HepG2 (cell line): ENCODE measurements at regions of chr11 and their contacts with region 1.

Region 1: DNA sequence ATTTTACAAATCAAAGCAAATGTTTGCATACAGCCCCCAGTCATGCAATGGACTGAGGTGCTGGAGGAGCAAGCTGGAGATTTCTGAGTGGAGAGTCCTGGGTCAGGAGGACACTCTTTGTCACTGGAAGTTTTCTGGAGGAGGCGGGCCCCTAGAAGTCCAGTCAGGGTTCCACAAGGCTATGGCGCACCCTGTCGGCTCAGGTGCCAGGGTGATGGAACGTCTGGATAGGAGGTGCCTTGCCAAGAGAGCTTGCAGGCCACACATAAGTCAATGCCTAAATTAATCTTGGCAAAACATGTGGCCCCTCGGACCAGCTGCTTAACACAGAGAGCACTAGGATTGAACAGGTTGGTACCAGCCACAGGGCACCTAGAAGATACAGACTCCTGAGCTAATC is 174.7 kb upstream of the CADM1 start:
- DNase-seq: peak; percentile 37
- ATAC-seq: peak; percentile 96
- H3K4me3 ChIP-seq: no peak overlapping the region
- H3K27ac ChIP-seq: no peak overlapping the region
- H3K4me1 ChIP-seq: no peaks in the 10 kb centered on the region
- H3K27me3 ChIP-seq: peaks cover 1 to 13% of the 10 kb centered on the region in 2 experiments; a peak in 1 of 5 replicates
- CTCF ChIP-seq: peak; percentile 77
- EP300 ChIP-seq: no peak
- POLR2A ChIP-seq: no peak
- RAD21 ChIP-seq: peak; percentile 75

Region 2: GRCh38 chr11:115256397-115257197 is 422.3 kb before region 1 on chr11:
- CTCF ChIA-PET with region 1: no interaction called
- POLR2A ChIA-PET with region 1: no interaction called
- in situ Hi-C with region 1: no loop called
- intact Hi-C with region 1: loop called (anchors 5 kb)
- DNase-seq: no peak
- ATAC-seq: no peak
- H3K4me3 ChIP-seq: no peak overlapping the region
- H3K27ac ChIP-seq: no peak overlapping the region
- H3K4me1 ChIP-seq: no peaks in the 10 kb centered on the region
- H3K27me3 ChIP-seq: no peaks in the 10 kb centered on the region
- CTCF ChIP-seq: no peak
- EP300 ChIP-seq: no peak
- POLR2A ChIP-seq: no peak
- RAD21 ChIP-seq: no peak

Region 3: GRCh38 chr11:115324581-115325432 is 354.1 kb before region 1 on chr11:
- CTCF ChIA-PET with region 1: interaction called, 11 read pairs
- POLR2A ChIA-PET with region 1: no interaction called
- in situ Hi-C with region 1: loop called (anchors 10 kb)
- intact Hi-C with region 1: loop called (anchors 1 kb)
- DNase-seq: peak; percentile 70
- ATAC-seq: peak; percentile 89
- H3K4me3 ChIP-seq: no peak overlapping the region
- H3K27ac ChIP-seq: no peak overlapping the region
- H3K4me1 ChIP-seq: 0 out of 2 replicates have a peak, but pooled peaks cover 4% of the 10 kb centered on the region
- H3K27me3 ChIP-seq: no peaks in the 10 kb centered on the region
- CTCF ChIP-seq: peak; percentile 83
- EP300 ChIP-seq: no peak
- POLR2A ChIP-seq: no peak
- RAD21 ChIP-seq: peak; percentile 69

Region 4: DNA sequence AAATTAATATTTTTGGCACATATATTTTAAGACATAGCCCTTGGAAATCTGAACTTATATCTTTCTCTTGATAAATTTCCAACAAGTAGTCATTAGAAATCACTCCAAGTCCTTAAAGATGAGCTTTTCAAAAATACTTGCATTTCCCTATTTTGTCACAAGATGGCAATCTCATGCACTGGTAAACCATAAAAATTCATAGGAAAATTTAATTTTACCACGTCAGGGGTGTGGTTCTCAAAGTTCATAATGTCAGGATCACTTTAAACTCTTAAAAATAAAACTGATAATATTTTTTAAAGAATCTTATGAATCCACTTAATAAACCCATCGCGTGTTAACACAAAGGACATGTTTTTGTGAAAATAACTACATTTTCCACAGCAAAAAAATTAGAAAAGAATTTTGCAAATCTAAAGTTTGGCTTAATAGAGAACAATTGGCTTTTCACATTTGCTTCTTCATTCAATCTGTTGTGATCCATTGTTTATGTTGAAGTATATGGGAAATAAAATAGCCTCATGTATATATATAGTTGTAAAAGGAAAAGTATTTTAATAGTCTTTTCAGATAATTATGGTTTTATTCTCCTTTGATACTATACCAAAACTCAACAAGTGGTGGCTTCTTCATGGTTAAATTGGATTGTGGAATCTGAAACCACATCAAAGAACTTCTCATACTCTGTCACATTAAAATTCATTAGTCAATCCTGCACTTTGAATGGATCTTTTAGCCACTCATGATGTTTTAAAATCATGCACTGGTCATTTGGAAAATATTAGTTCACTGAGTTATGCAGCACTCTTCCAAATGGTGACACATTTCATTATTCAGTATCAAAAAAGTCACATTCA is 343.8 kb before region 1 on chr11:
- CTCF ChIA-PET with region 1: interaction called, 8 read pairs
- POLR2A ChIA-PET with region 1: no interaction called
- in situ Hi-C with region 1: loop called (anchors 10 kb)
- intact Hi-C with region 1: loop called (anchors 1 kb)
- DNase-seq: peak; percentile 19
- ATAC-seq: no peak
- H3K4me3 ChIP-seq: no peak overlapping the region
- H3K27ac ChIP-seq: no peak overlapping the region
- H3K4me1 ChIP-seq: peaks cover 9% of the 10 kb centered on the region; the same call in 1 of the 2 replicates
- H3K27me3 ChIP-seq: peaks cover 0 to 1% of the 10 kb centered on the region in 2 experiments; a peak in 1 of 5 replicates
- CTCF ChIP-seq: peak; percentile 58
- EP300 ChIP-seq: no peak
- POLR2A ChIP-seq: no peak
- RAD21 ChIP-seq: 0 out of 2 replicates have a peak, but pooled peaks have one; percentile 56

Region 5: DNA sequence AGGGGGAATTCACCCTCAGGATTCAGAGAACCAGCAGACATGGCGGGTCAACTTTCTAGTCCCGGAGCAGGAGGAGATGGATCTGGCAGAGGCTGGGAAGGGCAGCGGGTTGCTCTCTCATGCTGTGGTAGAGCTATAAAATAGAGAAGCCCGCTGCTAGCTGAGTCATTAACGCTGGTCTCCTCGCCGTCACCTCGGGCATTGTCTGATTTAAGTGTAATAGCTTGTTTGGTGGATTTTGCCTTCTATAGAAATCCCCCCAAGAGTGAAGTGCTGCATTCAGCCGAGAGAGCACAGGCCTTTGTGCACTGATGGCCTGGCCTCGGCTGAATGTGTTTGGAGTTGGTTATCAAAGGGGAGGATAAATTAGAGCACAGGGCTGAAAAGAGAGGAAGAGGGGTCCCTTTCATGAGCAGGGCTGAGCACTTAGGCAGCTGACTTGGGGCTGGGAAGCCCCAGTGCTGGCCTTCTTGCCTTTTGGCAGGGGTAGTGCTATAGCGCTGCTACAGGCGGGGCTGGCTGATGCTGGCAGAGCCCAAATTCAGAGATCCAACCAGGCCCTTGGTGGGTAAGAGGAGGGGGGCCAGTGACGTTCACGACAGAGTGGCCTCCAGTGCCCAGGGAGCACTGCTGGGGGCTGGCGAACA is 13.6 kb before region 1 on chr11:
- CTCF ChIA-PET with region 1: no interaction called
- POLR2A ChIA-PET with region 1: no interaction called
- in situ Hi-C with region 1: no loop called
- intact Hi-C with region 1: no loop called
- DNase-seq: no peak
- ATAC-seq: no peak
- H3K4me3 ChIP-seq: no peak overlapping the region
- H3K27ac ChIP-seq: no peak overlapping the region
- H3K4me1 ChIP-seq: no peaks in the 10 kb centered on the region
- H3K27me3 ChIP-seq: peaks cover 0 to 14% of the 10 kb centered on the region in 2 experiments; a peak in 3 of 5 replicates
- CTCF ChIP-seq: no peak
- EP300 ChIP-seq: no peak
- POLR2A ChIP-seq: no peak
- RAD21 ChIP-seq: no peak

Region 6: DNA sequence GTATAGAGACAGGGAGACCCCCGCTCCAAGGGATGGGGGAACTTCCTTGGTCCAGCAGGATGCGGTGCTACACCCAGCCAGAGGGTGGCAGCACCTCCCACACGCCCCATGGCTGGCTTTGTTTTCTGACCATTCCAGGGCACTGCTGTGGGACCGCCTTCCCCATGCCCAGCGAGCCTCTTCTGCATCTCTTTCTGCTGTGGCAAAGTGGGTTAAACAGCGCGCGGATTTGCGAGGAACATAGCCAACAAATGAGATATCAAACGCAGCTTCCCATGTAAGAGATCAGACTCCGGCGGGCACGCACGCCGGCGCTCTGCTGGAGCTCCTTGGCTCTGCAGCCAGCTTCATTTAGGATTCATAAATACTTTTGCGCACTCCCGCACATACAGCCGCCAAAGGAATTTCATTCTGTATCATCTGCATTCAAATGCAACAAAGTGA is 311.1 kb after region 1 on chr11:
- CTCF ChIA-PET with region 1: no interaction called
- POLR2A ChIA-PET with region 1: no interaction called
- in situ Hi-C with region 1: no loop called
- intact Hi-C with region 1: no loop called
- DNase-seq: no peak
- ATAC-seq: peak; percentile 84
- H3K4me3 ChIP-seq: no peak overlapping the region
- H3K27ac ChIP-seq: no peak overlapping the region
- H3K4me1 ChIP-seq: no peaks in the 10 kb centered on the region
- H3K27me3 ChIP-seq: no peaks in the 10 kb centered on the region; a peak in 1 of 5 replicates
- CTCF ChIP-seq: peak; percentile 69
- EP300 ChIP-seq: no peak
- POLR2A ChIP-seq: no peak
- RAD21 ChIP-seq: no peak